ENCODE measurements at regions of chr4 and their contacts with region 1.

Region 1: GRCh38 chr4:119041951-119042560 is 93.6 kb upstream of the MYOZ2 start:
- DNase-seq: peak; percentile 74
- ATAC-seq: peak; percentile 91
- H3K4me3 Mint-ChIP-seq: no peak overlapping the region
- H3K27ac Mint-ChIP-seq: no peak overlapping the region
- H3K4me1 Mint-ChIP-seq: peaks cover 21% of the 10 kb centered on the region
- H3K27me3 Mint-ChIP-seq: no peaks in the 10 kb centered on the region

Region 2: GRCh38 chr4:119212234-119212963 is 170.3 kb after region 1 on chr4 and contains the start of gene USP53:
- CTCF ChIA-PET with region 1: interaction called, 16 read pairs
- DNase-seq: peak; percentile 97
- ATAC-seq: peak; percentile 95
- H3K4me3 Mint-ChIP-seq: peak within 1 kb of the TSS; percentile 84
- H3K27ac Mint-ChIP-seq: peak within 1 kb of the TSS; percentile 93
- H3K4me1 Mint-ChIP-seq: peaks cover 36% of the 10 kb centered on the region
- H3K27me3 Mint-ChIP-seq: peaks cover 6% of the 10 kb centered on the region
- total RNA-seq, gene USP53: 5.6 to 6.1 TPM

Region 3: GRCh38 chr4:119290598-119290997 is 248.5 kb after region 1 on chr4:
- CTCF ChIA-PET with region 1: interaction called, 22 read pairs
- DNase-seq: no peak
- ATAC-seq: no peak
- H3K4me3 Mint-ChIP-seq: no peak overlapping the region
- H3K27ac Mint-ChIP-seq: no peak overlapping the region
- H3K4me1 Mint-ChIP-seq: peaks cover 3% of the 10 kb centered on the region
- H3K27me3 Mint-ChIP-seq: no peaks in the 10 kb centered on the region